ENCODE measurements at regions of chr13 and their contacts with region 1.

Region 1: DNA sequence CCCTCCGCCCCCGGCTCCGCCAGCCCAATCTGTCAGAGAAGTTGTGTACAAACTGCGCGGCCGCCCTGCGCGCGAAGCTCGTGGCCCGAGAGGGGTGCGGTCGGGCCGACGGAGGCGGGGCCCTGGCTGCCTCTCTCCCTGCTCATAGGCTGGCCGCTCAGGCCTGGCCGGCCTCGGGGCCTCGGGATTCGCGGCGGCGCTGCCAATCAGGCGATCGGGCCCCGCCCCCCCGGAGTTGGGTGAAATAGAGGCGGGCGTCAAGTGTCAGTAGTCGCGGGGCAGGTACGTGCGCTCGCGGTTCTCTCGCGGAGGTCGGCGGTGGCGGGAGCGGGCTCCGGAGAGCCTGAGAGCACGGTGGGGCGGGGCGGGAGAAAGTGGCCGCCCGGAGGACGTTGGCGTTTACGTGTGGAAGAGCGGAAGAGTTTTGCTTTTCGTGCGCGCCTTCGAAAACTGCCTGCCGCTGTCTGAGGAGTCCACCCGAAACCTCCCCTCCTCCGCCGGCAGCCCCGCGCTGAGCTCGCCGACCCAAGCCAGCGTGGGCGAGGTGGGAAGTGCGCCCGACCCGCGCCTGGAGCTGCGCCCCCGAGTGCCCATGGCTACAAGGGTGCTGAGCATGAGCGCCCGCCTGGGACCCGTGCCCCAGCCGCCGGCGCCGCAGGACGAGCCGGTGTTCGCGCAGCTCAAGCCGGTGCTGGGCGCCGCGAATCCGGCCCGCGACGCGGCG is at the start of gene KLF5:
- DNase-seq: peak; percentile 98 to 99
- H3K4me3 ChIP-seq: peak within 1 kb of the TSS; percentile 69
- H3K4me1 ChIP-seq: peaks cover 61% of the 10 kb centered on the region
- H3K27me3 ChIP-seq: no peaks in the 10 kb centered on the region

Region 2: DNA sequence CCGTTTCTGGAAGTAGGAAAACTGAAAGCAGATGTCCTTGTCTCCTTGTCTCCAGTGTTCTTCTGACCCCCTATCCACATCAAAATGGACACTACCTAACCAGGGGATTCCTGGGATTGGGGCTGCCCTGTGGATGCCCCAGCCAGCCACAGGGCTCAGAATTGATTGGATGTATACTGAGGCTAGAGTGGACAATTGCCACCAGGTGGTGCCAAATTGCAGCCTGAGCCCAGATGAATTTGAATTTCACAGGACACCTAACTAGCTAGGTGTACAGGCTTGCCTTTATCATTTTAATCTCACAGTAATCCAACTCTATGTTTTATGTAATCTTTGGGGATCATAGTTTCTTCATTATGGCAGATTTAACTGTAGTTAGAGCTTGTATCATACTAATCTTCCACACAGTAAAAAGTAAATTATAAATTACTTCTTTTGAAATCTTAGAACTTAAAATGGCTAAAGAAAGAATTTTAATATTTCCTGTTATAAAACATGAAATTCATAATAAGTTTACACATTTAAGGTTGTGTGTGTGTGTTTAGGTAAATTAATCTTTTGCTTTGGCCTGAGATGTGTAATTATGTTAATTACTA is 219.0 kb before region 1 on chr13:
- in situ Hi-C with region 1: loop called (anchors 25 kb)
- DNase-seq: peak; percentile 62 to 70
- H3K4me3 ChIP-seq: no peak overlapping the region
- H3K4me1 ChIP-seq: peaks cover 3% of the 10 kb centered on the region
- H3K27me3 ChIP-seq: no peaks in the 10 kb centered on the region

Region 3: DNA sequence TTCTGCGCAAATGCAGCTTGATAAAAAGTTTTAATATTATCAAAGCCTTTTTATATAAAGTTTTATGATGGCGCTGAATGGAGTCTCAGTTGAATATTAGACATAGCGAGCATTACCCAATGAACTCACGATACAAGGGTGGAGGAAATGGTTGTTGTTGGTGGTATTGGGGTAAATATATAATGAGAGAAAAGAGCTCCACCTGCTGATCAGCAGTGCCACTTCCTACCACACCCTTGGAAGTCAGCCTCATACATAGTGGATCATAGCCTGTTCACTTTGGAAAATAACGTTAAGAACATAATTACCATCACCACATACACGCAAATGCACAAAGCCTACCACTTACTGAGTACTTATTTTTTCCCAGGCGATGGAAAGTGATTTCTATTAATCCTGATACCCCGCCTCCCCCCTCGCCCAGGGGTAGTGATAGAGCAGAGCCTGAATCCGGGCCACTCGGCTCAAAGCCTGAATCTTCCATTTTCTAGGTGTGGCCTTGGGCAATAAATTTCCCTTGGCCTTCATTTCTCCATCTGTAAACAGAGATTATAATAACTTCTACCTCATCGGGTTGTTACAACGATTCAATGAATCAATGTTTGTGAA is 358.2 kb after region 1 on chr13:
- in situ Hi-C with region 1: loop called (anchors 25 kb)
- DNase-seq: peak; percentile 29 to 39
- H3K4me3 ChIP-seq: no peak overlapping the region
- H3K4me1 ChIP-seq: no peaks in the 10 kb centered on the region; the same call in 1 of the 2 replicates
- H3K27me3 ChIP-seq: no peaks in the 10 kb centered on the region

Region 4: DNA sequence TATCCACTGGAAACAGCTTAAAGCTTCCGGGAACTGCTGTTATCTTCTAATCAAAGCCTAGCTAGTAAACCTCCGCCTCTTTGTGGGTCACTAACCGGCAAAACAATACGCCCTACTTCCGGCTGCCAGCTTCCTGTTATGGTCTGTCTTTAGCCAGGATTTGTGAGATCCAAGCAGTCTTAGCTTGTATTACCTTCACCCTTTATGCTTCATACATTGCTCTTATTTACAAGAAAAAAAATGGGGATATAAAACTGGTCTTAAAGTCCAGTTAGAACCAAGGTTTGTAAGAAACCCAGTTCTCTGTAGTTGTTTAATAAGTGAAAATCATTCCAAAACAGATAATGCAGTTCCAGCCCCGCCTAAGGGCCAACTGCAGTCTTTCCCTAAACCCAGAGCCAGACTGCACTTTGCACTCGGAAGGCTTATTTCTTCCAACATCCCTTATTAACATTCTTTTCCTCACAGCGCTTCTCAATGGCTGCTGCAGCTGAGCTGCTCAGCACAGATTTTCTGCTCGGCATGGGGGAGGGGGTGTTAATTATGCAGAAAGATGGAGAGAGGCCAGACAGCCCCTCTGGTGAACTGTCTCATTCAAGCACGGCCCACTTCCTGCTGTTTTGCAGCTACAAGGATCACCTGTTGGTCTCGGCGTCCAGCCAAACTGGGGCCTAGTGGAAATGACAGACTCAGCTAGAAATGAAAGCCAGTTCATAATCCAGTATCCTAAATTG is 706.9 kb after region 1 on chr13:
- in situ Hi-C with region 1: no loop called
- DNase-seq: peak; percentile 65 to 85
- H3K4me3 ChIP-seq: no peak overlapping the region
- H3K4me1 ChIP-seq: peaks cover 8% of the 10 kb centered on the region
- H3K27me3 ChIP-seq: no peaks in the 10 kb centered on the region